ENCODE measurements at regions of chr12 and their contacts with region 1.

Region 1: GRCh38 chr12:82627569-82628198 is 59.0 kb upstream of the TMTC2 start:
- DNase-seq: no peak
- H3K4me3 ChIP-seq: no peak overlapping the region
- H3K27ac ChIP-seq: no peak overlapping the region
- H3K4me1 ChIP-seq: no peaks in the 10 kb centered on the region
- H3K27me3 ChIP-seq: no peaks in the 10 kb centered on the region
- CTCF ChIP-seq: no peak

Region 2: GRCh38 chr12:82383930-82384552 is 243.6 kb before region 1 on chr12:
- intact Hi-C with region 1: loop called (anchors 10 kb)
- DNase-seq: no peak
- H3K4me3 ChIP-seq: no peak overlapping the region
- H3K27ac ChIP-seq: no peak overlapping the region
- H3K4me1 ChIP-seq: no peaks in the 10 kb centered on the region
- H3K27me3 ChIP-seq: no peaks in the 10 kb centered on the region
- CTCF ChIP-seq: peak; percentile 20

Region 3: GRCh38 chr12:82517027-82517426 is 110.7 kb before region 1 on chr12:
- intact Hi-C with region 1: loop called (anchors 5 kb)
- DNase-seq: no peak
- H3K4me3 ChIP-seq: no peak overlapping the region
- H3K27ac ChIP-seq: no peak overlapping the region
- H3K4me1 ChIP-seq: no peaks in the 10 kb centered on the region
- H3K27me3 ChIP-seq: no peaks in the 10 kb centered on the region
- CTCF ChIP-seq: peak; percentile 37